Aorta (tissue), 5 donors: ENCODE measurements at regions of chr2 and their contacts with region 1.

Region 1: GRCh38 chr2:69061525-69061924 is 48.5 kb downstream of the ANTXR1 start:
- DNase-seq: no peak
- ATAC-seq: no peak
- H3K4me3 ChIP-seq: no peak overlapping the region
- H3K27ac ChIP-seq: no peak overlapping the region
- H3K4me1 ChIP-seq: peaks cover 3 to 7% of the 10 kb centered on the region in 2 donors
- H3K27me3 ChIP-seq: no peaks in the 10 kb centered on the region

Region 2: GRCh38 chr2:67812682-67813081 is 1248.8 kb before region 1 on chr2:
- intact Hi-C with region 1: no loop called
- DNase-seq: no peak
- ATAC-seq: no peak
- H3K4me3 ChIP-seq: no peak overlapping the region
- H3K27ac ChIP-seq: no peak overlapping the region
- H3K4me1 ChIP-seq: no peaks in the 10 kb centered on the region
- H3K27me3 ChIP-seq: no peaks in the 10 kb centered on the region

Region 3: GRCh38 chr2:68878753-68879152 is 182.8 kb before region 1 on chr2:
- intact Hi-C with region 1: no loop called
- DNase-seq: no peak
- ATAC-seq: no peak
- H3K4me3 ChIP-seq: no peak overlapping the region
- H3K27ac ChIP-seq: no peak overlapping the region
- H3K4me1 ChIP-seq: no peaks in the 10 kb centered on the region
- H3K27me3 ChIP-seq: no peaks in the 10 kb centered on the region

Region 4: DNA sequence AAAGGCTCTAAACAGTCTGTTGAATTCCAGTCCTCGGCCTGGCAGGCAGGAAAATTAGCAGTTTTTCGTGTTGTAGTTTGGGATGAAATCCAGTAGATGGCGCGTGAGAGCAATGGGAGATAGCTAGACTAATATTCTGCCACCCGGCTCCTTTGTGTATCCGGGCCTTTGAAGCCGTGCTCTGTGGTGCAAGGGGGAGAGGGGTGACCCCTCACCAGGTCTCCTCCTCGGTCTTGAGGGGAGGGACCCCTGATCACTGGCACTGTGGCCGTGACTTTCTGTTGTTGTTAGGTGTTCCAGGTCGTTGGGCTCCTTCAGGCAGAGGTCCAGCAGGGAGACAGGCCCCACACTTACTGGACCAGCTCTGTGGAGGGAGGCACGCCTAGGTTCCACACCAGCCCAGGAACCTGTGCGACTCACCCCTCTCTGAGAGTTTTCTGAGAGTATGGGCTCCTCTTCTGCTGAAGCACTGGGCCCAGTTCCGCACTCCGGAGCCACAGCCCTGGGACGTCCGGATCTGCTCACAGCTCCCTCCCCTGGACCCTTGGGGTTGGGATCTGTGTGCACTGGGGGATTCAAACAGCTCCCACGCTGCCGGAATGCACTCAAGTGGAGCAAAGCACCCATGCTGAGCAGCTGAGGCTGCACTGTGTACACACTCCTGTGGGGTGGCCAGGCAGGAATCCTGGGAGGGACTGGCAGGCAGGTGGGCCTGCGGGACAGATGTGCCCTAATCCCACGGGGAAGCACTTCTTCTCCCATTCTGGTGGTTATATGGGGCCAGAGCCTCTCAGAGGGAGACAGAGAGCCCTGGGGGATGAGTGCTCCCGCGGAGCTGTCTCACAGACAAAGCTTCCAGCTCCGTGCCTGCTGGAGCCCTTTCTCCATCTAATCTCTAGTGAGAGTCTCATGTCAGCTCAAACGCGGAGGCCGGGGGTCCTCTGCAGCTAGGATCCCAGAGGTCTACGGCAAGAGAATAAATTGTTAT is 117.7 kb before region 1 on chr2:
- intact Hi-C with region 1: no loop called
- DNase-seq: peak in 1 of 2 donors; percentile 57
- ATAC-seq: peak; percentile 85
- H3K4me3 ChIP-seq: no peak overlapping the region
- H3K27ac ChIP-seq: no peak overlapping the region
- H3K4me1 ChIP-seq: no peaks in the 10 kb centered on the region
- H3K27me3 ChIP-seq: no peaks in the 10 kb centered on the region

Region 5: DNA sequence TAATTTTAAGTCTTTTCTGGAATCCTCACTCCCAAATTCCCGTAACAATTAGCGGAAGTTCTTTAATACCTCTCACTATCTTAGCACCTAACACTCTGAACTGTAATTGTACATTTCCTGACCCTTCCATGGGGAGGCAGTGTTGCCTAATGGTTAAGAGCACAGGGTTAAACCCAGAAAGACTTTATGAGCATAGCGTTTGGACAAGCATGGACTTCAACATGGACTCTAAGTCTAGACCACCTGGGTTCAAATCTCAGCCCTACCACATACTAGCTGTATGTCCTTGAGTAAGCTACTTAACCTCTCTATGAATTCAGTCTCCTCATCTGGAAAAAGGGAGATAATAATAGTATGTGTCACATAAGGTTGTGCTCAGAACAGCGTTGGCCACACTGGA is 35.5 kb before region 1 on chr2:
- intact Hi-C with region 1: loop called in 1 of 2 experiments (anchors 5 kb)
- DNase-seq: no peak
- ATAC-seq: peak; percentile 74
- H3K4me3 ChIP-seq: no peak overlapping the region
- H3K27ac ChIP-seq: no peak overlapping the region
- H3K4me1 ChIP-seq: peaks cover 7 to 14% of the 10 kb centered on the region in 2 donors
- H3K27me3 ChIP-seq: no peaks in the 10 kb centered on the region

Region 6: DNA sequence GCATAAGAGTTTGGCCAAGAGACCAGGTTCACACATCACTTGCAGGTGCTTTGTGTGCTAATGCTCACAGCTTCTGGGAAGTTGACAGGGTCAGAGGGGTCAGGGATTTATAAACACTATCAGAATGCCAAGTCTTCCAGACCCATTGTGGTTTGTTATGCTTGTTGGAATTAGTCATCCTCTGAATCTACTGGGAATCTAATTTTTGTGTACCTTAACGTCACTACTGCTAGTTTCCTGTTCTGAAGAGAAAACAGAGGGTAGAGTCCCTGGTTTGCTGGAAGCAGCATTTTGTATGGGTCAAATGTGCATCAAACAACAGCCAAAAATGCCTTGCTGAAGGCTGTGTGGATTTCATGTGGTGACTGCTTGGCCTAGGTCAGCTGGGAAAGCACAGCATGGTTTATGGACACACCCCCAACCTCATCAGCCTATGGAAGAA is 15.3 kb before region 1 on chr2:
- intact Hi-C with region 1: no loop called
- DNase-seq: no peak
- ATAC-seq: no peak
- H3K4me3 ChIP-seq: no peak overlapping the region
- H3K27ac ChIP-seq: peak overlapping the region in 1 of 2 donors; percentile 52
- H3K4me1 ChIP-seq: peaks cover 0 to 5% of the 10 kb centered on the region in 2 donors
- H3K27me3 ChIP-seq: no peaks in the 10 kb centered on the region

Region 7: GRCh38 chr2:69118609-69119008 is 57.1 kb after region 1 on chr2:
- intact Hi-C with region 1: loop called in 1 of 2 experiments (anchors 5 kb)
- DNase-seq: peak in 1 of 2 donors; percentile 64
- ATAC-seq: peak; percentile 60
- H3K4me3 ChIP-seq: no peak overlapping the region
- H3K27ac ChIP-seq: peak overlapping the region; percentile 23 to 87
- H3K4me1 ChIP-seq: peaks cover 7 to 9% of the 10 kb centered on the region in 2 donors
- H3K27me3 ChIP-seq: no peaks in the 10 kb centered on the region